BJ (cell line): ENCODE measurements at regions of chr6 and their contacts with region 1.

Region 1: GRCh38 chr6:69084746-69085335 is 449.8 kb downstream of the ADGRB3 start:
- DNase-seq: no peak
- H3K4me3 ChIP-seq: no peak overlapping the region
- H3K27me3 ChIP-seq: no peaks in the 10 kb centered on the region
- CTCF ChIP-seq: no peak

Region 2: DNA sequence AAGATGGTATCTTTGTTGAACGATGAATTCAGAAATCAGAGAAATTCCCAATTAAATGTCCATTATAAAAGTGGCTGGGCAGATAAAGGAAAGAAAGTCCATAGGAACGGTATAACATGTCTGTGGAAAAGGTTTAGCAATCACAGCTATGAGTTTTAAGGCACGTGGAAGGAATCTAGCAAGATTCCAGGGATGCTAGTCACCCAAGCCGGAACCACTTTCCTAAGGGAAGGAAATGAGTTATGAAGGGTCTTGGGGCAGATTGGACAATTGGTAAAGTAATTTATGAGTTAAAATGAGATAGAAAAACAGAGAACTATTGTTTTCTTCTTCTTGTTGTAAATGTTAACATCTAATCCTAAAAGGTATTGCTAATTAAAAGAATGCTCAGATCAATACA is 65.0 kb before region 1 on chr6:
- CTCF ChIA-PET with region 1: interaction called, 3 read pairs
- POLR2A ChIA-PET with region 1: interaction called, 13 read pairs
- DNase-seq: no peak
- H3K4me3 ChIP-seq: no peak overlapping the region
- H3K27me3 ChIP-seq: no peaks in the 10 kb centered on the region
- CTCF ChIP-seq: no peak